ENCODE measurements at regions of chr17 and their contacts with region 1.

Region 1: GRCh38 chr17:1516388-1517161 is at the start of gene INPP5K:
- DNase-seq: peak; percentile 98 to 99
- ATAC-seq: peak; percentile 94 to 97 (median 96)
- H3K4me3 ChIP-seq: peak within 1 kb of the TSS; percentile 99
- H3K27ac ChIP-seq: peak within 1 kb of the TSS; percentile 96
- H3K4me1 ChIP-seq: peaks cover 56% of the 10 kb centered on the region
- H3K27me3 ChIP-seq: no peaks in the 10 kb centered on the region
- CTCF ChIP-seq: no peak
- total RNA-seq, gene INPP5K: 35.7 to 41.8 (median 40.1) TPM

Region 2: GRCh38 chr17:1275962-1276736 is 240.4 kb before region 1 on chr17:
- intact Hi-C with region 1: loop called (anchors 2 to 5 kb)
- DNase-seq: peak; percentile 70 to 80
- ATAC-seq: peak; percentile 71 to 89 (median 80)
- H3K4me3 ChIP-seq: no peak overlapping the region
- H3K27ac ChIP-seq: no peak overlapping the region
- H3K4me1 ChIP-seq: no peaks in the 10 kb centered on the region
- H3K27me3 ChIP-seq: peaks cover under 1 to 36% (median 7%) of the 10 kb centered on the region in 3 donors
- CTCF ChIP-seq: peak; percentile 76

Region 3: DNA sequence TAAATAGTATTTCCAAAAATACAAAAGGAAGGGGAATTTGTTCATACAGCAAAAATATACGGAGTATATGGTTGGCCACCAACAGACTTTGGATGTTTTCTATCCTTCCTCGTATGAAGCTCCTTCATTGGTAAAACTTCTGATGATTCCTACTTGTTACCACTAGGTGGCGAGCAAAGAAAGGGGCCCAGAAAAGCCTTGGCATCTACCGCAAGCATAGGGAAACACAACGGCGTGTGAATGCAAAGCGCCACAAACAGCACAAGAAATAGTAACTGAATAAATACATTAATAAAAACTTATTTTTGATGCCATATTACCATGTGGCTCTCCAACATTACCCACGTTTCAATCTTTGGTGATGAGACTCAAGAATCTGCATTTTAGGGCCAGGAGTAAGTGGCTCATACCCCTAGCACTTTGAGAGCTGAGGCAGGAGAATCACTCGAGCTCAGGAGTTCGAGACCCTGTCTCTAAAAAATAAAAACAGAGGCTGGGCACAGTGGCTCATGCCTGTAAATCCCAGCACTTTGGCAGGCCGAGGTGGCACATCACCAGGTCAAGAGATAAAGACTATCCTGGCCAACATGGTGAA is 151.0 kb before region 1 on chr17:
- intact Hi-C with region 1: loop called (anchors 2 to 5 kb)
- DNase-seq: no peak
- ATAC-seq: peak; percentile 69 to 78 (median 76)
- H3K4me3 ChIP-seq: peak overlapping the region; percentile 31
- H3K27ac ChIP-seq: peak overlapping the region; percentile 65
- H3K4me1 ChIP-seq: peaks cover 86% of the 10 kb centered on the region
- H3K27me3 ChIP-seq: no peaks in the 10 kb centered on the region
- CTCF ChIP-seq: peak; percentile 90

Region 4: GRCh38 chr17:1495265-1495989 is 21.1 kb before region 1 on chr17:
- intact Hi-C with region 1: loop called in 1 of 2 experiments (anchors 2 kb)
- DNase-seq: peak; percentile 69 to 91
- ATAC-seq: peak; percentile 79 to 86 (median 84)
- H3K4me3 ChIP-seq: peak overlapping the region; percentile 5
- H3K27ac ChIP-seq: peak overlapping the region; percentile 63
- H3K4me1 ChIP-seq: peaks cover 52% of the 10 kb centered on the region
- H3K27me3 ChIP-seq: no peaks in the 10 kb centered on the region
- CTCF ChIP-seq: no peak

Region 5: GRCh38 chr17:1714427-1714979 is 197.9 kb after region 1 on chr17:
- intact Hi-C with region 1: no loop called
- DNase-seq: peak; percentile 99
- ATAC-seq: peak; percentile 40 to 48 (median 42)
- H3K4me3 ChIP-seq: peak overlapping the region; percentile 97
- H3K27ac ChIP-seq: peak overlapping the region; percentile 100
- H3K4me1 ChIP-seq: peaks cover 52% of the 10 kb centered on the region
- H3K27me3 ChIP-seq: no peaks in the 10 kb centered on the region
- CTCF ChIP-seq: no peak

Measured in psoas muscle (tissue), 8 donors.